PC-9 (cell line): ENCODE measurements at regions of chr15 and their contacts with region 1.

Region 1: DNA sequence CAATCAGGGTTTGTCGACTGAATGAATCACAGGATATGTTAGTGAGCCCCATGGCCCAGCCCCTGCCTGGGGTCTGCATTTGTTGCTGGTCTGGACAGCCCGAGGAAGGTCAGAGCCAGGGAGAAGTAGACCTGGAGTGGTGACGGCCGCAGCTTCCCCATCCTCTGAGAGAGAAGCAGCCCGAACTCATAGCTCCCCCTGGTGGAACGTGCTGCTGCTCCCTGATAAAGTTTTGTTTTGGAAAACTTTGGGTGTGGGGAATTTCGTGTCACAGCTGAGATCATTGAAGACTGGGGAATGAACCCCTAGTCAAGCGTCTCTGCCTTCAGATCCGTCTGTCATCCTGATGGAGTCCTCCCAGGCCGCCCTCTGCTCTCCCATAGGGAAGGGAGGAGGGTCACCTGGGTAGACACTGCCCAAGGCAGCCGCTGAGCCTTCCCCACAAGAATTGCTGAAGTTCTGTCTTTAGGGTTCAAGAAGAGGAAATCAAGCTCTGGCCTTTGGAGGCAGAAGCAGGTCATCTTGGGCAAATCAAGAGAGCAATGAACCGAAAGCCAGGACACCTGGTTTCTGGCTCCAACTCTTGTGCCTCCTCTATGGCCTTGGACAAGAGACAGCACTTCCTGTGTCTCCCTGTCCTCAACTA is 60.5 kb downstream of the GLDN start:
- DNase-seq: peak in 1 of 2 experiments; percentile 24
- H3K4me3 ChIP-seq: no peak overlapping the region
- H3K27ac ChIP-seq: no peak overlapping the region
- H3K4me1 ChIP-seq: no peaks in the 10 kb centered on the region
- H3K27me3 ChIP-seq: peaks cover 18% of the 10 kb centered on the region; the same call in 1 of the 2 replicates
- CTCF ChIP-seq: peak; percentile 54; the same call in 1 of the 2 replicates

Region 2: GRCh38 chr15:51281368-51281967 is 120.5 kb before region 1 on chr15:
- CTCF ChIA-PET with region 1: no interaction called
- POLR2A ChIA-PET with region 1: no interaction called
- intact Hi-C with region 1: loop called (anchors 5 kb)
- DNase-seq: peak in 1 of 2 experiments; percentile 26
- H3K4me3 ChIP-seq: no peak overlapping the region
- H3K27ac ChIP-seq: no peak overlapping the region
- H3K4me1 ChIP-seq: no peaks in the 10 kb centered on the region
- H3K27me3 ChIP-seq: peaks cover 12% of the 10 kb centered on the region; the same call in 1 of the 2 replicates
- CTCF ChIP-seq: peak; percentile 58; the same call in 1 of the 2 replicates

Region 3: DNA sequence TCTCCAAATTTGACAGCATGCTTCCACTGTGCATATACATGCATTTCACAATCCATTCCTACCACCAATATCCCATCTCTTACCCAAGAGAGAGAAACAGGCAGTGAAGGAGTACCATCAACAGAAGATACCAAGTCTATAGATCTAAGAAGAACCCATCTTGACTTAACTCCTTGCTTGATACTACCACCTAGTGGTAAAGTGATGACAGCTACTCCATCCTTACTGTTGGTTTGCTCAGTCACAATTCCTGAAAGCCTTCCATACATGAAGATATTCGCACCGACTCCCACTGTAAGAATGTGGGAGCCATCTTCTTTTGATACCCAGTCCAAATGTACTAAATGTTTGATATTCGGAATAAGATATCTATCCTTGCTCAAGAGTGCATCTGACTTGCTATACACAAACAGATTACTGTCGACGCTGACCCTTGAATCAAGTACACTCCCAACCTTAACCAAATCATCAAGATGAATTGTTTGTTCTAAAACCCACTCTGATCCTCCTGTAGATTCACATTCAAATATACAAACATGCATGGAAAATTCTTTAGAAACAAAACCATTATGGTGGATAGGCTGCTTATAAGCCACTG is 97.5 kb after region 1 on chr15:
- CTCF ChIA-PET with region 1: interaction called, 3 read pairs
- POLR2A ChIA-PET with region 1: no interaction called
- intact Hi-C with region 1: loop called (anchors 2 kb)
- DNase-seq: no peak
- H3K4me3 ChIP-seq: no peak overlapping the region
- H3K27ac ChIP-seq: no peak overlapping the region
- H3K4me1 ChIP-seq: no peaks in the 10 kb centered on the region
- H3K27me3 ChIP-seq: no peaks in the 10 kb centered on the region
- CTCF ChIP-seq: peak; percentile 64